Activated T-helper 1 cell treated with anti-CD3 and anti-CD28 coated beads, Interleukin-12 subunit alpha, Interleukin-12 subunit beta, Interleukin-2, Interleukin-4 antibody, amounts not matched to agents 30 ng/mL and 10 ng/mL and 1 ng/mL, durations not matched to agents 14 hours and 24 hours and 36 hours (primary cell): ENCODE measurements at regions of chrX and their contacts with region 1.

Region 1: DNA sequence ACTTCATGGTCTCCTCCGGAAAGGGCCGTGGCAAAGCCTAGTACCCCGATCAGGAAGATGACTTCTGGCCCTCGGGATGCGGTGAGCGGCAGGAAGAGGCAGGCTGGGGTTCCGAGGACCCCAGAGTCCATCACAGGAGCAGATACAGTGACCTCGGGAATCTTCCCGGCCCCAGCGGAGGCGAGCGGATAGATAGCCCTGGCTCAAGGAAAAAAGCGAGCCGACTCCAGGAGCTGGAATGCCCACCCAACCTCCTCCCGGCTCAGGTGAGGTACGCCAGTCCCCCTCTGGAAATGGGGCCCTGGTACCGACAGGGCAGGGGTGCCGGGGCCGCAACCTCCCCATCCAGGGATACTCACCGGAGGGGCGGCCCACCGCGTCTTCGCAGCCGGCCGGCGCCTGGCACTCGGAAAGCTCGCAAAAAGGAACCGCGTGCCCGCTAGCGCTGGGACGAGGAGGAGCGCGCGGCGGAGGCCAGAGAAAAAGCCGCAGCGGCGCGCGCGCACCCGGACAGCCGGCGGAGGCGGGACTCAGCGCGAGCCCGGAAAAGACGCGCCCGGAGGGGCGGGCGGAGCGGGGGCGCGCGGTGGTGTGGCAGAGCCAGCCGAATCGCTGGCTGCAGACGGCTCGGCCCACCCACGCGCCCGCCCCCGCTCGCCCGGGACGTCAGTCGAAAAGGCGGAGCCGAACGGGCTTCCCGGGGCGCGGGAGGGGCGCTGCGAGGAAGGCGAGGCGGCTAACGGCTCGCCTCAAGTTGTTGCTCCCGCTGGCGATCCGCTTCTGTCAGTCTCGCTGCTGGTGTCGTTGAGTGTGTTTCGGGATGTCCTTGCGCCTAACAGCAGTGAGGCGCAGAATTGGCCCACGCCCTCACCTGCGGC is at the start of gene ACSL4:
- DNase-seq: peak; percentile 81
- H3K4me3 Mint-ChIP-seq: peak within 1 kb of the TSS; percentile 93
- H3K27ac Mint-ChIP-seq: peak within 1 kb of the TSS; percentile 95
- H3K4me1 Mint-ChIP-seq: peaks cover 32% of the 10 kb centered on the region
- H3K27me3 Mint-ChIP-seq: peaks cover 2% of the 10 kb centered on the region
- total RNA-seq, gene ACSL4: 76.0 and 77.3 TPM in 2 replicates

Region 2: GRCh38 chrX:109536439-109537336 is 196.3 kb before region 1 on chrX and contains the start of gene NXT2:
- intact Hi-C with region 1: loop called (anchors 2 kb)
- DNase-seq: peak; percentile 79
- H3K4me3 Mint-ChIP-seq: peak within 1 kb of the TSS; percentile 95
- H3K27ac Mint-ChIP-seq: peak within 1 kb of the TSS; percentile 98
- H3K4me1 Mint-ChIP-seq: peaks cover 25% of the 10 kb centered on the region
- H3K27me3 Mint-ChIP-seq: peaks cover 2% of the 10 kb centered on the region
- total RNA-seq, gene NXT2: 10.3 and 11.8 TPM in 2 replicates

Region 3: GRCh38 chrX:109826954-109827708 is 94.1 kb after region 1 on chrX:
- intact Hi-C with region 1: no loop called
- DNase-seq: no peak
- H3K4me3 Mint-ChIP-seq: no peak overlapping the region
- H3K27ac Mint-ChIP-seq: no peak overlapping the region
- H3K4me1 Mint-ChIP-seq: peaks cover 6% of the 10 kb centered on the region
- H3K27me3 Mint-ChIP-seq: peaks cover 3% of the 10 kb centered on the region

Region 4: GRCh38 chrX:109840585-109840984 is 107.6 kb after region 1 on chrX:
- intact Hi-C with region 1: loop called (anchors 1 kb)
- DNase-seq: no peak
- H3K4me3 Mint-ChIP-seq: no peak overlapping the region
- H3K27ac Mint-ChIP-seq: no peak overlapping the region
- H3K4me1 Mint-ChIP-seq: peaks cover 5% of the 10 kb centered on the region
- H3K27me3 Mint-ChIP-seq: no peaks in the 10 kb centered on the region

Region 5: DNA sequence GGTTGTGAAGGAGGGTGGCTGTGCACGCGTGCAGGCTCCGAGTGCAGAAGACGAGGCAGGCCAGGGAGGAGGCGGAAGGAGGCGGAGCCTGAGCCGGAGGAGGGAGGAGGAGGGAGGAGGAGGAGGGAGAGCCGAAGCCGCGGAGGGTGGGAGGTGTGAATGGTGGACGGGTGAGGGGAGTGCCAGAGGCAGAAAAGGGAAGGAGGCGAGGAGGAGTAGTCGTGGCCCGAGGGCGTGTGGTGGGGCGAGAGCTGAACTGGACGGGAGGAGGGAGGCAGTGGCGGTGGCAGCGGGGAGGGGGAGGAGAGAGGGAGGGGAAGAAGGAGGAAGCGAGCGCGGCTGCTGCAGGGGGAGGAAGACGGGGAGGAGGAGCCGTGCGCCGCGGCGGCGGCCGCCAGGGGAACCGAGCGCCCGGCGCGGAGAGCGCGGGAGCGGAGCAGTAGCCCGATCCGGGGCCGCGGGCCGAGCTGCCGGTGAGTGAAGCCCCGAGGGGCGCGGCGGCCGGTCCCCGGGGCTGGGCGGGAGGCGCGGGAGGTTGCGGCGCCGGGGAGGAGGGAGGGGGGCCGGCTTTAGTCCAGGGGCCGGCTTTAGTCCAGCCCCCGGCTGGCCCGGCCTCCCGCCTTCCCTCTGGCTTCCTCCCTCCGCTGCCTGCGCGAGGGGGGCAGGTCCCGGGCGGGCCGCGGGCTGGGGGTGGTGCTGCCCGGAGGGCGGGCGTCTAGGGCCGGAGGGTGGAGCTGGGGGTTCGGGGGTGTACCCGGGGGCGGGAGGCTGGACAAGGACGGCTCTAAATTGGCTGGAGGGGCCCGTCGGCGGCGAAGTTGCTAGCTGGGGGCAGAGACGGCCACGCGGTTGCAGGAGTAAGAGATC is 269.5 kb after region 1 on chrX and contains the start of gene TMEM164:
- intact Hi-C with region 1: loop called (anchors 2 kb)
- DNase-seq: peak; percentile 72
- H3K4me3 Mint-ChIP-seq: peak within 1 kb of the TSS; percentile 92
- H3K27ac Mint-ChIP-seq: peak within 1 kb of the TSS; percentile 92
- H3K4me1 Mint-ChIP-seq: peaks cover 23% of the 10 kb centered on the region
- H3K27me3 Mint-ChIP-seq: no peaks in the 10 kb centered on the region
- total RNA-seq, gene TMEM164: 17.9 and 19.1 TPM in 2 replicates